ENCODE measurements at regions of chr2 and their contacts with region 1.

Region 1: GRCh38 chr2:73886357-73886756 is 6.5 kb upstream of the ACTG2 start:
- DNase-seq: no peak
- H3K4me3 Mint-ChIP-seq: peak overlapping the region; percentile 63
- H3K27ac Mint-ChIP-seq: peak overlapping the region; percentile 84
- H3K4me1 Mint-ChIP-seq: peaks cover 29% of the 10 kb centered on the region
- H3K27me3 Mint-ChIP-seq: peaks cover 4% of the 10 kb centered on the region

Region 2: GRCh38 chr2:73859721-73860586 is 26.4 kb before region 1 on chr2:
- intact Hi-C with region 1: loop called (anchors 1 kb)
- DNase-seq: no peak
- H3K4me3 Mint-ChIP-seq: no peak overlapping the region
- H3K27ac Mint-ChIP-seq: peak overlapping the region; percentile 56
- H3K4me1 Mint-ChIP-seq: peaks cover 48% of the 10 kb centered on the region
- H3K27me3 Mint-ChIP-seq: no peaks in the 10 kb centered on the region

Region 3: DNA sequence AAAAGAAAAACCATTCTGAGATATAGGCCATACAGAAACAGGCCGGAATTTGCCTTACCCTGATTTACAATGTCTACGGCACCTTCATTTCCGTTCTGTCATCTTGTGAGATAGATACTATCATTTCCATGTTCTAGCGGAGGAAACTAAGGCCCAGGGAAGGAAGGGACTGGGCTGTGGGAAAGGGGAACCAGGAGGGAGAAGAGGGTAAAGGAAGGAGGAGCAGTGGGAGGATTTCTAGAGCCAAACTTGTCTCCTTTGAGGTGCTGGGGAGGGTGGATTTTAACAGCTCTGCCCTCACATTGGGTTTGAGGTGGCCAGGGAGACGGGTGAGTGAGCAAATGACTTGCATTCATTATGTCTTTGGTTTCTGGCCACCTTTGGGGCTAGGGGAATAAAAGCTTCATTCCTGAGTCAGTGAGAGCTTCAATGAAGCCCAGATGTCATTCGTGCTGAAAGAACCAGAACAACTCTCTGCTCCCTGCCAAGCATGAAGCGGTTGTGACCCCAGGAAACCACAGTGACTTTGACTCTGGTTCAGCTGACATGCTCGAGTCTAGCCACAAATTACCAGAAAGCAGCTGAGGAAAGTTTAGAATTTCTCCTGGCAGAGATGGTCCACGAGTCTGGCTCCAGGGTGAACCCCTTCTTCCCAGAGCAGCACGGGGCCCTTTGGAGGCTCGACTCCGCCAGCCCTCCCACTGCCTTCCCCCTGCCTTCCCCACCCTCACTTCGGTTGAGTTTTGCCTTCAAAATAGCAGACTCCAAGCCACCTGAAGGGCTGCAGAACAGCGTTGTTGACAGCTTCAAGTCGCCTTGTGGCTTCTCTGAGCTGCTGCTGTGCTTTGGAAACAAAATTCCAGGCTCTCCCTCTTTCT is 10.2 kb after region 1 on chr2:
- intact Hi-C with region 1: loop called (anchors 1 kb)
- DNase-seq: peak; percentile 22
- H3K4me3 Mint-ChIP-seq: peak overlapping the region; percentile 54
- H3K27ac Mint-ChIP-seq: peak overlapping the region; percentile 90
- H3K4me1 Mint-ChIP-seq: peaks cover 43% of the 10 kb centered on the region
- H3K27me3 Mint-ChIP-seq: peaks cover 2% of the 10 kb centered on the region

Region 4: DNA sequence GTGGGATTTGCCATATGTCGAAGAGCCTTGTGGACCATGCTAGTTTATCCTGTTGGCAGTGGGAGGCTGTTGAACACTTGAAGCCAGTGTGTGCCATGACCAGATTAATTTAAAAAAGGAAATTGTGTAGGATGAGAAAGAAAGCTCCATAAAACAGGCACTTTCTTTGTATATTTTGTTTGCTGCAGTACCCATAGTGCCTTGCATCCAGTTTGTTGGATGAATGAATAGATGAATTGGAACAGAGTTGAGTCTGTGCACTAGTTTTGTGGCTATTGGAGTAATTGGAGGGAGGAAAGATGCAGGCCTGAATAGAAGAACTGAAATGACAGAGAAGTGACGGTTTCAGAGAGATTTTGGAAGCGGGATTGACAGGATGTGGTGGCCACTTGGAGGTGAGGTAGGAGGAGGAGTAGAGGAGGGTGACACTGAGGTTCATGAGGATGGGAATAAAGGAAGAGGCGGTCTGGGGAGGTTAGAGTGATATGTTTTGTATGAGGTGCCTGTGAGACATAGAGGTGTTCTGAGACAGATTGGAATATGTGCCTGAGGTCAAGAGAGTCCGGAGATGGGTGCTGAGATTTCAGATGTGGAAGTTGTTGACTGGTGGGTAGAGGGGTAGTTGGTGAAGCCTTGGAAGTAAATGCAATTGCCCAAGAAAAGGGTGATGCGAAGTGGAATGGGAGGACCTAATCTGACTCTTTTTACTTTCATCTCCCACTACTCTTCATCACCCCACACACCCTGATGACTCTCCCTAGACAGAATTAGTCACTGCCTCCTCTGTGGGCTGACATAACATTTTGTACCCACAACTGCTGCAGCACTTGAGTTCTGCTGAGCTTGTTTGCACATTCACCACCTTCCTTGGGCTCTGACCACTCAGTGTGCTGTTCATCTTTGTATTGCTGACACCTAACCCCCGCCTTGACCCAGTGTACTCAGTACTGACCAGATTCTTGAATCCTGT is 45.5 kb after region 1 on chr2:
- intact Hi-C with region 1: loop called (anchors 1 kb)
- DNase-seq: peak; percentile 22
- H3K4me3 Mint-ChIP-seq: peak overlapping the region; percentile 35
- H3K27ac Mint-ChIP-seq: peak overlapping the region; percentile 82
- H3K4me1 Mint-ChIP-seq: peaks cover 63% of the 10 kb centered on the region
- H3K27me3 Mint-ChIP-seq: no peaks in the 10 kb centered on the region

Measured in activated T-helper 1 cell treated with anti-CD3 and anti-CD28 coated beads, Interleukin-12 subunit alpha, Interleukin-12 subunit beta, Interleukin-2, Interleukin-4 antibody, amounts not matched to agents 30 ng/mL and 10 ng/mL and 1 ng/mL, durations not matched to agents 14 hours and 24 hours and 36 hours (primary cell).